Heart left ventricle (tissue), 16 donors: ENCODE measurements at regions of chr6 and their contacts with region 1.

Region 1: DNA sequence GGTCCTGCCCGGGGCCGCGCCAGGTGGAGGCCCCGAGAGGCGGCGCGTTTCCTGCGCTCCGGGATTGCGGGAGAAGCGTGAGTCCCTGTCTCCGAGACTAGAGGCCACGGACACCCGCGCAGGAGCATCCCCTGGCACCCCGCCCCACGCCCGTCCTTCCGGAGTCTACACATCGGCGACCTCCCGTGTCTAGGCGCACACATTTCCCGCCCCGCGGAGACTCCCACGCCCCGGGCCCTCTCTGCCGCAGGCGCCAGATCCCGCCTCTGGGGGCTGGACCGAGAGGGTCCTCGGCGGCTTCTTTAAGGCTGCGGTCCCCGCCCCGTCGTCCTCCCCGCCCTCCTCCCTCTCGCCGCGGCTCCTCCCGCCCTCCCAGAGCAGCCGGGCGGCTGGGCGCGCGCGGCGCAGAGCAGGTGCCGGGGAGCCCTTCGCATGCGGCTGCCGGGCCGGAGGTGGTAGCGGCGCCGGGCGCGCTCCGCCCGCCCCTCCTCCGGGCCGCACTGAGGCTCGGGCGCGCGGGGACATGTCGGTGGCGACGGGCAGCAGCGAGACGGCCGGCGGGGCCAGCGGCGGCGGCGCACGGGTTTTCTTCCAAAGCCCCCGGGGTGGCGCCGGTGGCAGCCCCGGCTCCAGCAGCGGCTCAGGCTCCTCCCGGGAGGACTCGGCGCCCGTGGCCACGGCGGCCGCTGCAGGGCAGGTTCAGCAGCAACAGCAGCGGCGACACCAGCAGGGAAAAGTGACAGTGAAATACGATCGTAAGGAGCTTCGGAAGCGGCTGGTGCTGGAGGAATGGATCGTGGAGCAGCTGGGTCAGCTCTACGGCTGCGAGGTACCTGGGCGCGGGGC is at the start of gene PPP1R14C:
- DNase-seq: peak; percentile 46 to 71 (median 58)
- ATAC-seq: peak; percentile 50 to 89 (median 82)
- H3K4me3 ChIP-seq: peak within 1 kb of the TSS; percentile 12 to 74 (median 62)
- H3K27ac ChIP-seq: peak within 1 kb of the TSS; percentile 46 to 85 (median 69)
- H3K4me1 ChIP-seq: peaks cover 0 to 39% (median 6%) of the 10 kb centered on the region in 12 donors
- H3K27me3 ChIP-seq: peaks cover 4 to 75% (median 21%) of the 10 kb centered on the region in 9 donors
- CTCF ChIP-seq: no peak
- POLR2A ChIP-seq: peak in 1 of 2 donors; percentile 67
- total RNA-seq, gene PPP1R14C: 62.3 to 143 (median 83.0) TPM

Region 2: DNA sequence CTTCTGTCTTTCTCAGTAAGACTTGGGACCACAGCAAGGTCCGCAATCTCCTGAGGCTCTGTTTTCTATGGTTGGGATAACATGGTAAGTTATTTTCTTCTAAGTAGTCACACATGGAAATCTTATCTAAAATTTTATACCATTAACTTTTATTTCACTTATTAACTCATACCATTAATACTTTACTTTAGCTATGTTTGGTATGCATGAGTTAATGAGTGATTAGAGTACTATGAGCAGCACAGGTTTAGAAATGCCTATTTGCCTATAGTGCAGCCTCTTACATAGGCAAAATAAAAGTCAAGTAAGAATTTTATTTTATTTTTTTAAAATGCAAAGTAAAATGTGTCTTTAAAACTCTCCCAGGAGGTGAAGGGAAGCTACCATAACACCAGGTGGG is 549.5 kb before region 1 on chr6:
- intact Hi-C with region 1: no loop called
- DNase-seq: no peak
- ATAC-seq: no peak
- H3K4me3 ChIP-seq: no peak overlapping the region
- H3K27ac ChIP-seq: no peak overlapping the region
- H3K4me1 ChIP-seq: no peaks in the 10 kb centered on the region
- H3K27me3 ChIP-seq: no peaks in the 10 kb centered on the region
- CTCF ChIP-seq: no peak
- POLR2A ChIP-seq: no peak

Region 3: GRCh38 chr6:150004783-150005717 is 137.8 kb before region 1 on chr6:
- intact Hi-C with region 1: no loop called
- DNase-seq: peak; percentile 93 to 96 (median 94)
- ATAC-seq: peak; percentile 98 to 100 (median 99)
- H3K4me3 ChIP-seq: peak overlapping the region; percentile 40 to 84 (median 64)
- H3K27ac ChIP-seq: peak overlapping the region in 3 of 12 donors; percentile 31 to 54 (median 42)
- H3K4me1 ChIP-seq: peaks cover 0 to 16% (median 8%) of the 10 kb centered on the region in 12 donors
- H3K27me3 ChIP-seq: peaks cover 0 to 70% (median 23%) of the 10 kb centered on the region in 9 donors
- CTCF ChIP-seq: no peak
- POLR2A ChIP-seq: no peak

Region 4: GRCh38 chr6:150079604-150080003 is 63.3 kb before region 1 on chr6:
- intact Hi-C with region 1: loop called in 1 of 10 experiments (anchors 5 kb)
- DNase-seq: no peak
- ATAC-seq: no peak
- H3K4me3 ChIP-seq: no peak overlapping the region
- H3K27ac ChIP-seq: no peak overlapping the region
- H3K4me1 ChIP-seq: no peaks in the 10 kb centered on the region
- H3K27me3 ChIP-seq: peaks cover 0 to 10% (median 0%) of the 10 kb centered on the region in 9 donors
- CTCF ChIP-seq: no peak
- POLR2A ChIP-seq: no peak

Region 5: GRCh38 chr6:150208611-150209352 is 65.9 kb after region 1 on chr6:
- intact Hi-C with region 1: loop called in 1 of 10 experiments (anchors 10 kb)
- DNase-seq: no peak
- ATAC-seq: peak in 3 of 4 donors; percentile 21 to 62 (median 51)
- H3K4me3 ChIP-seq: no peak overlapping the region
- H3K27ac ChIP-seq: peak overlapping the region in 4 of 12 donors; percentile 3 to 49 (median 26)
- H3K4me1 ChIP-seq: peaks cover 0 to 52% (median 20%) of the 10 kb centered on the region in 12 donors
- H3K27me3 ChIP-seq: no peaks in the 10 kb centered on the region
- CTCF ChIP-seq: no peak
- POLR2A ChIP-seq: no peak

Region 6: GRCh38 chr6:150314230-150315188 is 171.6 kb after region 1 on chr6:
- intact Hi-C with region 1: loop called in 1 of 10 experiments (anchors 5 kb)
- DNase-seq: no peak
- ATAC-seq: peak in 1 of 4 donors; percentile 30
- H3K4me3 ChIP-seq: no peak overlapping the region
- H3K27ac ChIP-seq: no peak overlapping the region
- H3K4me1 ChIP-seq: peaks cover 0 to 7% (median 0%) of the 10 kb centered on the region in 12 donors
- H3K27me3 ChIP-seq: no peaks in the 10 kb centered on the region
- CTCF ChIP-seq: no peak
- POLR2A ChIP-seq: no peak

Region 7: GRCh38 chr6:150327117-150327774 is 184.4 kb after region 1 on chr6:
- intact Hi-C with region 1: loop called in 4 of 10 experiments (anchors 2 to 5 kb)
- DNase-seq: peak in 4 of 5 donors; percentile 35 to 74 (median 53)
- ATAC-seq: peak; percentile 68 to 87 (median 78)
- H3K4me3 ChIP-seq: no peak overlapping the region
- H3K27ac ChIP-seq: peak overlapping the region in 5 of 12 donors; percentile 11 to 56 (median 30)
- H3K4me1 ChIP-seq: peaks cover 0 to 36% (median 6%) of the 10 kb centered on the region in 12 donors
- H3K27me3 ChIP-seq: no peaks in the 10 kb centered on the region
- CTCF ChIP-seq: no peak
- POLR2A ChIP-seq: no peak